ENCODE measurements at regions of chr17 and their contacts with region 1.

Region 1: DNA sequence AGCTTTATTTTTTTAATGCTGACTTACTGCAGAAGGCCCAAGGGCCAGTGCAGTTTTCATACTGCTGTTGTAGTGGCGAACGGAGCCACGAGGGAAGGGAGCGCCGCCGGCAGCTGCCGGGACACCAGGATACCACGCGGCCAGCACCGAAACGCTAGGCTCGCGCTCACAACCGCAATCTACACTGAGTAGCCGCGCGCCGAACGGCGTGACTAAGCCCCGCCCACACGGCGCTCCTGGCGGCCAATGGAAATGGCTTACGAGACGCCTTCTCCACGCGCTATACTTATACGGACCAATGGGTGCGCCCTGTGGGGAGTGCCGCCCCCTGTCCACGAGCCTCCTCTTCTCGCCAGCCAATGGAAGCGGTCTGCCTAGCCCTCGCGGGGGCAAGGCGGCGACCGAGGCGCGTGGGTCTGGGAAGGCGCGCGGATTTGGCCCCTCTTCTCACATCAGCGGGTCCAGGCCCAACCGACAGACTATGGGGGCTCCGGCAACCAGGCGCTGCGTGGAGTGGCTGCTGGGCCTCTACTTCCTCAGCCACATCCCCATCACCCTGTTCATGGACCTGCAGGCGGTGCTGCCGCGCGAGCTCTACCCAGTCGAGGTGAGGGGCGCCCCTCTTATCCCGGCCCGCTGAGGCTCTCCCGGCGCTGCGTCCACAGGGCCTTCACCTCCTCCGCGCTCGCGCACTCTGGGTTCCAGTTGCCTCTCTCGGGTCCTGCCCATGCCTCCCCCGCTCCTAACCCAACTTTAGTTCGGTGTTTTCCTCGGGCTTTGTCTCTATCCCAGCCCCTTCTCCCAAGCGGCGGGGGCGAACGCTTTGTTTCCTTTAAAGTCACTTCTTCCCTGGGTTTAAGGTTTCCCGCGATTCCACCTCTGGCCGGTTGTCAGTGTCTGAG is at the start of gene TMEM97:
- DNase-seq: peak; percentile 95
- H3K4me3 ChIP-seq: peak within 1 kb of the TSS; percentile 55 to 69 (median 64)
- H3K27ac ChIP-seq: peak within 1 kb of the TSS; percentile 52
- H3K4me1 ChIP-seq: peaks cover 12% of the 10 kb centered on the region
- H3K27me3 ChIP-seq: no peaks in the 10 kb centered on the region
- CTCF ChIP-seq: peak in 1 of 2 donors; percentile 26
- total RNA-seq, gene TMEM97: 12.5 to 34.6 TPM

Region 2: DNA sequence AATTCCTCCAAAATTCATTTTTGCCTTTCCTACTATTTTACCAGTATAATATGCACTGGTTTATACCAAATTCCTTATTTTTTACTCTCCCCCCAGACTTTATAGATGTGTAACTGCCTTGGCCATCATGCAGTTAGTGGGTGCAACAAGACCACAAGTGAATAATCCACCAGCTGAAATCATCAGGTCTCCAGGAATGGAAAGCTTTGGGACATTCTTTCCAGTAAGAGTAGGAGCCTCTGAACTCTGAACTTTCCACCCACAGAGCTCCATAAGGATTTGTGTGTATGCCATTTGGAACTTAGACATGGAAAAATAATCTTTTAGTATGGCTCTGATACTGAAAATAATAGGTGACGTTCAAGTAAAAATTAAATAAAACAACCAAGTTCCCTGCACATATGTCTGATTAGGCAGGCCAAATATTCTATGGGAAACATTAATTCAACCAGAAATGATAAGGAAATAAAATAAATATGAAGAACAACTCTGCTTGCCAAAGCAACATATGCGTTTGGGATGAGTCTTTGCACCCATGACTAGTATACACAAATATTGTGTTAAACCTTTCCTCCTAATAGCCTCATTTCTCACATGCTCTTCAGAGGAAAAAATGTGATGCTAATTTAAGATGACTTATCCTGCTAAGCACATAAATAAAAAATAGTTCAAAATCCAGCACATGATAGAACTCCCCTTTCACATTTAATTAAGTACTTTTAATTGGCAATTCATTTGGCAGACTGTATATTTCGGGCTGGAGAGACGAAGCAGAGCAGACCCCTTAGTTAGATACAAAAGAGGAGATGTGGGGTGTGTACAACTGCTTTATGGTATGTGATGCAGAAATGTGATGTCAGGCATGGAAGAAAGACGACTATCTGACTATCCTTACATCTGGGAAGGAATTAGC is 414.2 kb before region 1 on chr17:
- CTCF ChIA-PET with region 1: no interaction called
- dilution Hi-C with region 1: loop called (anchors 5 kb)
- in situ Hi-C with region 1: no loop called
- intact Hi-C with region 1: no loop called
- DNase-seq: no peak
- H3K4me3 ChIP-seq: no peak overlapping the region
- H3K27ac ChIP-seq: no peak overlapping the region
- H3K4me1 ChIP-seq: no peaks in the 10 kb centered on the region
- H3K27me3 ChIP-seq: no peaks in the 10 kb centered on the region
- CTCF ChIP-seq: no peak

Region 3: DNA sequence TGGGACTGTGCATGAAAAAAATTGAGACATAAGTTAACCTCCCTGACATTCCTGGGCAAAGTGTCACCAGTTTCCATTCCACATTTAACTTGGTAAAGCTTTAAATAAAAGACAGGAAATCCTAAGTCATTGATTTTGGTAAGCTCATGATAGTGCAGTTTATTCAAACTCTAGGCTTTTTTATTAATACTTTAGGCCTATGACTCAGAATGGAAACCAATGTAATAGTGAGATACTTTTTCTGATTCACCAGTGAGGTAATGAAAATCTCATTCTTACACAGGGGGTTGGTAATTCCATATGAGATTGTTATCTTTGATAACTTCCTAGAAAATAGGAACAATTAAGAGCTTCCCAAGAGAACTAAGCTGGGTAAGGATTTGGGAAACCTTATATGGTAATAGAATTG is 185.4 kb before region 1 on chr17:
- CTCF ChIA-PET with region 1: interaction called, 10 read pairs
- dilution Hi-C with region 1: no loop called
- in situ Hi-C with region 1: no loop called
- intact Hi-C with region 1: no loop called
- DNase-seq: peak; percentile 79
- H3K4me3 ChIP-seq: no peak overlapping the region
- H3K27ac ChIP-seq: peak overlapping the region; percentile 43
- H3K4me1 ChIP-seq: peaks cover 11% of the 10 kb centered on the region
- H3K27me3 ChIP-seq: no peaks in the 10 kb centered on the region
- CTCF ChIP-seq: no peak

Region 4: GRCh38 chr17:28252436-28252835 is 66.6 kb before region 1 on chr17:
- CTCF ChIA-PET with region 1: no interaction called
- dilution Hi-C with region 1: no loop called
- in situ Hi-C with region 1: no loop called
- intact Hi-C with region 1: loop called (anchors 5 kb)
- DNase-seq: peak; percentile 83
- H3K4me3 ChIP-seq: no peak overlapping the region
- H3K27ac ChIP-seq: no peak overlapping the region
- H3K4me1 ChIP-seq: peaks cover 15% of the 10 kb centered on the region
- H3K27me3 ChIP-seq: no peaks in the 10 kb centered on the region
- CTCF ChIP-seq: no peak

Region 5: GRCh38 chr17:28282596-28282995 is 36.4 kb before region 1 on chr17:
- CTCF ChIA-PET with region 1: interaction called, 7 read pairs
- dilution Hi-C with region 1: loop called (anchors 5 kb)
- in situ Hi-C with region 1: no loop called
- intact Hi-C with region 1: no loop called
- DNase-seq: peak; percentile 91
- H3K4me3 ChIP-seq: no peak overlapping the region
- H3K27ac ChIP-seq: no peak overlapping the region
- H3K4me1 ChIP-seq: peaks cover 20% of the 10 kb centered on the region
- H3K27me3 ChIP-seq: peaks cover 5% of the 10 kb centered on the region
- CTCF ChIP-seq: no peak

Region 6: GRCh38 chr17:28333083-28333746 is 14.2 kb after region 1 on chr17:
- CTCF ChIA-PET with region 1: no interaction called
- dilution Hi-C with region 1: no loop called
- in situ Hi-C with region 1: no loop called
- intact Hi-C with region 1: no loop called
- DNase-seq: no peak
- H3K4me3 ChIP-seq: no peak overlapping the region
- H3K27ac ChIP-seq: no peak overlapping the region
- H3K4me1 ChIP-seq: peaks cover 25% of the 10 kb centered on the region
- H3K27me3 ChIP-seq: no peaks in the 10 kb centered on the region
- CTCF ChIP-seq: no peak